ENCODE measurements at regions of chr6 and their contacts with region 1.

Region 1: GRCh38 chr6:36196880-36197548 is 470 bp downstream of the BRPF3 start:
- DNase-seq: peak; percentile 100
- ATAC-seq: peak; percentile 96
- H3K4me3 Mint-ChIP-seq: peak overlapping the region; percentile 82
- H3K27ac Mint-ChIP-seq: peak overlapping the region; percentile 90
- H3K4me1 Mint-ChIP-seq: peaks cover 45% of the 10 kb centered on the region
- H3K27me3 Mint-ChIP-seq: no peaks in the 10 kb centered on the region

Region 2: DNA sequence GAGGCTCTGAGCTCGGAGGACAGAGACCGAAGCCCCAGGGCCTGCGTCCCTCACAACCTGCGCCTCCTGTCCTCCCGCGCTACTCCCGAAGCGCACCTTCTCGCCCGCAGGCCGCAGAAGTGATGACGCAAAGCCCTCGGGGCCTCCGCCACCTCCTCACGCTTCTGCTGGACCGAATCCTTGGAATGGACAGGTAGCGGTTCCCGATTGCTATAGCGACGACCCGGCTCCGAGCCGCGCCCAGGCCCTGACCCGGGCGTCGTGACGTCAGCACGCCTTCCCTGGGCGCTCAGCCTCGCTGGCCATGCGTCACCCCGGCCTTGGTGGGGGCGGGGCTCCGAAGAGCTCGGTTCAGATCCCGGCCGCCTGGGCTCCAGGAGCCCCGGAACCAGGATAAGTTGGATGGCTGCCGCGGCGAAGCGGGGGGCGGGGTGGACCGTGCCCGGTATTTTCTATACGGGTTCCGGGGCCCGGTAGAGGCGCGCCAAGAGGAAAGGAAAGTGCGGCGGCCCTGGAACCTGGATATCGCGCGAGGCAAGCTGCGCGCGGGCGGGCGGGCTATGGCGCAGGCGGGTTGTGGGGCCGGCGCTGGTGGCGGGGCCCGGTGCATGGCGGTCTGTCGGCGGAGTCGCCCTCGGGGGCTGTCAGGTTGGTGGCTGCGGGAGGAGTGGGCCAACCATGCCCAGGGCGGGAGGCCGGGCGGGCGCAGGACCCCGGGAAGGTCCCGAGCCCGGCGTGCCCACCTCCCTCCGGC is 937.6 kb before region 1 on chr6 and contains the start of gene ZNF76:
- CTCF ChIA-PET with region 1: no interaction called
- POLR2A ChIA-PET with region 1: no interaction called
- intact Hi-C with region 1: loop called in 1 of 2 experiments (anchors 2 kb)
- DNase-seq: peak; percentile 95
- ATAC-seq: peak; percentile 89
- H3K4me3 Mint-ChIP-seq: peak within 1 kb of the TSS; percentile 91
- H3K27ac Mint-ChIP-seq: peak within 1 kb of the TSS; percentile 90
- H3K4me1 Mint-ChIP-seq: peaks cover 45% of the 10 kb centered on the region
- H3K27me3 Mint-ChIP-seq: no peaks in the 10 kb centered on the region
- total RNA-seq, gene ZNF76: 35.2 to 40.1 TPM

Region 3: GRCh38 chr6:35640017-35640664 is 556.9 kb before region 1 on chr6:
- CTCF ChIA-PET with region 1: no interaction called
- POLR2A ChIA-PET with region 1: no interaction called
- intact Hi-C with region 1: no loop called
- DNase-seq: no peak
- ATAC-seq: peak; percentile 21
- H3K4me3 Mint-ChIP-seq: no peak overlapping the region
- H3K27ac Mint-ChIP-seq: peak overlapping the region; percentile 10
- H3K4me1 Mint-ChIP-seq: peaks cover 58% of the 10 kb centered on the region
- H3K27me3 Mint-ChIP-seq: no peaks in the 10 kb centered on the region

Region 4: GRCh38 chr6:36123257-36124139 is 73.5 kb before region 1 on chr6:
- CTCF ChIA-PET with region 1: interaction called, 4 read pairs
- POLR2A ChIA-PET with region 1: no interaction called
- intact Hi-C with region 1: loop called (anchors 1 to 2 kb)
- DNase-seq: peak; percentile 95
- ATAC-seq: peak; percentile 77
- H3K4me3 Mint-ChIP-seq: peak overlapping the region; percentile 27
- H3K27ac Mint-ChIP-seq: peak overlapping the region; percentile 64
- H3K4me1 Mint-ChIP-seq: peaks cover 89% of the 10 kb centered on the region
- H3K27me3 Mint-ChIP-seq: no peaks in the 10 kb centered on the region

Region 5: GRCh38 chr6:36139429-36139828 is 57.6 kb before region 1 on chr6:
- CTCF ChIA-PET with region 1: interaction called, 7 read pairs
- POLR2A ChIA-PET with region 1: no interaction called
- intact Hi-C with region 1: loop called in 1 of 2 experiments (anchors 1 kb)
- DNase-seq: peak; percentile 51
- ATAC-seq: no peak
- H3K4me3 Mint-ChIP-seq: no peak overlapping the region
- H3K27ac Mint-ChIP-seq: no peak overlapping the region
- H3K4me1 Mint-ChIP-seq: peaks cover 26% of the 10 kb centered on the region
- H3K27me3 Mint-ChIP-seq: no peaks in the 10 kb centered on the region

Region 6: DNA sequence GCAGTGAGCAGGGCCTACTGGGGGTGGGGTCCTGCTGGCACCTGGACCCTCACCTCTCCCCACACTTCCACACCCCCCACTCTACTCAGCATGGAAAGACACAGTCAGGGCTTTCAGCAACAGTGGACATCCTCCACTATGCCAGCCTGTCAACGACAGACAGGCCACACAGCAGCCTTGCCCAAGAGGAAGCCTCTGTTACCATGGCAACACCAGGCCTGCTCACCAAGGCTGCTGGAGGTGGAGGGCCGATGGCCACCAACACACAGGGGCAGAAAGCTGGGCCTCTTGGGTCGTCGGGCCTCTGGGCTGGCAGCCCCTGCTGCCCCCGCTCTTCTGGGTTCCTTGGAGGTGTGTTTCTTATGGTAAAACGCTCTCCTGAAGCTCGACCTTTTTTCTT is 126.1 kb after region 1 on chr6:
- CTCF ChIA-PET with region 1: no interaction called
- POLR2A ChIA-PET with region 1: no interaction called
- intact Hi-C with region 1: no loop called
- DNase-seq: no peak
- ATAC-seq: no peak
- H3K4me3 Mint-ChIP-seq: no peak overlapping the region
- H3K27ac Mint-ChIP-seq: no peak overlapping the region
- H3K4me1 Mint-ChIP-seq: no peaks in the 10 kb centered on the region
- H3K27me3 Mint-ChIP-seq: no peaks in the 10 kb centered on the region

Region 7: DNA sequence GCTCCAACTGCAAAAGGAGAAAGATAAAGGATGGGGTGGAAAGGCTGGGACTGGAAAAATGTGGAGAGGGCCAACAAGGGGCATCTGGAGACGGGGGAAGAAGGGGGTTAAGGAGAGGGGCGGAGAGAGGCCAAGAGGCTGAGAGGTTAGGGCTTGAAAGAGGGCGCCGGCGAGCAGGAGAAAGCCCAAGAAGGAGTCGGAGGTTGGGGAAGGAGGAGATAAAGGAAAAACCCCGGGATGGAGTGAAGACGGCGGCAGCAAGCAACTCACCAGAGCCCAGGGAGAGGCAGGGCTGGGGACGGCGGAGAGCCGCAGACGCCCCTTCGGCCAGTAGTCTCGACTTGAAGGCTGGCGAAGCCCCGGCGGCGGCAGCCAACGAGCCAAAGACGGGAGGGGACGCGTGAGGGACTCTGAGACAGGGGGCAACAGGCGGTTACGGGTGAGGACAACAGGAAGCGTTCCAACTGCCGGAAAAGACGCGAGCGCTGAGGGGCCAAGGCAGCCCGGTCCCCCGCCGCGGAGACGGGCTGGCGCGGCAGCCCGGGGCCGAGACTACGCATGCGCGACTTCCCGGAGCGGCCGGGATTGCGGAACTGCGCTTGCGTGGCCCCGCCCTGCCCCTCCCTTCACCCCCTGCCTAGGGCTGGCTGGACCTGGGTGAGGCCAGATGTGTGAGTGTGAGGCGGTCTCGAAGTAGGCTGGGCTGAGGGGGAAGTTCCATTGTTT is 350.1 kb after region 1 on chr6 and contains the start of gene STK38:
- CTCF ChIA-PET with region 1: no interaction called
- POLR2A ChIA-PET with region 1: no interaction called
- intact Hi-C with region 1: loop called in 1 of 2 experiments (anchors 1 kb)
- DNase-seq: peak; percentile 97
- ATAC-seq: peak; percentile 90
- H3K4me3 Mint-ChIP-seq: peak within 1 kb of the TSS; percentile 94
- H3K27ac Mint-ChIP-seq: peak within 1 kb of the TSS; percentile 97
- H3K4me1 Mint-ChIP-seq: peaks cover 36% of the 10 kb centered on the region
- H3K27me3 Mint-ChIP-seq: no peaks in the 10 kb centered on the region
- total RNA-seq, gene STK38: 24.0 to 27.0 TPM

Region 8: GRCh38 chr6:37239950-37240713 is 1043.1 kb after region 1 on chr6:
- CTCF ChIA-PET with region 1: no interaction called
- POLR2A ChIA-PET with region 1: no interaction called
- intact Hi-C with region 1: loop called in 1 of 2 experiments (anchors 5 kb)
- DNase-seq: peak; percentile 90
- ATAC-seq: peak; percentile 92
- H3K4me3 Mint-ChIP-seq: peak overlapping the region; percentile 19
- H3K27ac Mint-ChIP-seq: peak overlapping the region; percentile 84
- H3K4me1 Mint-ChIP-seq: peaks cover 46% of the 10 kb centered on the region
- H3K27me3 Mint-ChIP-seq: no peaks in the 10 kb centered on the region